Left ventricle myocardium superior (tissue), 1 donor: ENCODE measurements at regions of chr3 and their contacts with region 1.

Region 1: GRCh38 chr3:99842826-99843589 is 25.3 kb downstream of the CMSS1 start:
- DNase-seq: no peak
- ATAC-seq: peak; percentile 78

Region 2: DNA sequence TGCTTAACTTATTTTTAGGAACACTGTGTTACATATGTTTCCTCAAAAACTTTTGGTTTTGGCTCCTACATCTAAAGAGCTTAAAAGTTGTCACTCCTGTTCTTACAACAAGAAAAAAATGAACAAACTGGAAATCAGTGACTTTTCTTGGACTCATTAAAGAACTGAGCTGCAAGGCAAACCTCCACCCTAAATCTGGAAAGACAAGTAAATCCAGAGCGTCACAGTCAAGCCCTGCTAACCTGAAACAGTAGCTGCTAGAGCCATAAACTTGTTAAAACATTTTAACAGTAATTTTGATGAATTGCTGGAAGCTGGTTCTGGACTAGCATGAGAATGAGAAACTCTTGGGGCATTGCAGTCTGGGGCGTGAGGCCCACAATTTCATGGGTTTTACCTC is 555.1 kb before region 1 on chr3:
- intact Hi-C with region 1: no loop called
- DNase-seq: no peak
- ATAC-seq: no peak

Region 3: GRCh38 chr3:99429502-99429901 is 413.5 kb before region 1 on chr3:
- intact Hi-C with region 1: no loop called
- DNase-seq: no peak
- ATAC-seq: no peak

Region 4: DNA sequence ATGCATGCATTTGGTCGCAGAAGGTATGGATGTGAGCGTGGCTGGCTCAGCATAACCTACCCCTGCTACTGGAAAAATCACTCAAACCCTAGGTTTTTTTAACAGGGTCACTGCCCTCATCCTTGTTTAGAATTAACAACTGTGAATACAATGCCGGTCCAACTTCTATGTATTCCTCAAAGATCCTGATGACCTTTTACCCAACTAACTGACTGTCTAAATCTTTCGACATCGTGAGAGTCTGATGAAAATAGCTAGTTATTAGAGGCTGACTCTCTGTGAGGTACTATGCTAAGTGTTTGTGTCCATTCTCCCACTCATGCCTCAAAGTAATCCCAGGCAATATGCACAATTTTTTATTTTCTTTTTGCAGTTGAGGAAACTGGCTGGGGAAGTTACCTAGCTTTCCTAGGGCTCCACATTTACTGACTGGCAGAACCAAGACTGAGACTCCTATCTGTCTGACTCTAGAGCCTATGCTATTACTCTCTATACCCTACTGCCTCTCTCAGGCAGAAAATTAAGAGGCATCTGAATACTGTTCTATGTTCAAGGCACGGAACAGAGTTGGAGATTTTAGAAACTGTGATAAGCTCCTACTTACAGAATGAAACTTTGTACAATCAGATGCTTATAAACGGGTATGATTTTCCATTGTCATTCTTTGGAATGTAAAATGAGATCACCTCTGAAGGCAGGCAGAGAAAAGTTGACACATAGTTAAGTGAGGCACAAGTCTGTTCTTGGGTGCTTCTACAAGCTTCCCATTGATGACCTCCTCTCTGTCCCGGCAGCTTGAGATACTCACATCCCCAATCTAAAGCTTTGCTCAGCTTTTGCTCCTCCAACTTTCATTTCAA is 214.9 kb after region 1 on chr3:
- intact Hi-C with region 1: loop called (anchors 10 kb)
- DNase-seq: no peak
- ATAC-seq: peak; percentile 72

Region 5: GRCh38 chr3:100254168-100254777 is 411.3 kb after region 1 on chr3:
- intact Hi-C with region 1: loop called (anchors 5 kb)
- DNase-seq: peak; percentile 48
- ATAC-seq: peak; percentile 89